AG04449 (cell line): ENCODE measurements at regions of chr9 and their contacts with region 1.

Region 1: DNA sequence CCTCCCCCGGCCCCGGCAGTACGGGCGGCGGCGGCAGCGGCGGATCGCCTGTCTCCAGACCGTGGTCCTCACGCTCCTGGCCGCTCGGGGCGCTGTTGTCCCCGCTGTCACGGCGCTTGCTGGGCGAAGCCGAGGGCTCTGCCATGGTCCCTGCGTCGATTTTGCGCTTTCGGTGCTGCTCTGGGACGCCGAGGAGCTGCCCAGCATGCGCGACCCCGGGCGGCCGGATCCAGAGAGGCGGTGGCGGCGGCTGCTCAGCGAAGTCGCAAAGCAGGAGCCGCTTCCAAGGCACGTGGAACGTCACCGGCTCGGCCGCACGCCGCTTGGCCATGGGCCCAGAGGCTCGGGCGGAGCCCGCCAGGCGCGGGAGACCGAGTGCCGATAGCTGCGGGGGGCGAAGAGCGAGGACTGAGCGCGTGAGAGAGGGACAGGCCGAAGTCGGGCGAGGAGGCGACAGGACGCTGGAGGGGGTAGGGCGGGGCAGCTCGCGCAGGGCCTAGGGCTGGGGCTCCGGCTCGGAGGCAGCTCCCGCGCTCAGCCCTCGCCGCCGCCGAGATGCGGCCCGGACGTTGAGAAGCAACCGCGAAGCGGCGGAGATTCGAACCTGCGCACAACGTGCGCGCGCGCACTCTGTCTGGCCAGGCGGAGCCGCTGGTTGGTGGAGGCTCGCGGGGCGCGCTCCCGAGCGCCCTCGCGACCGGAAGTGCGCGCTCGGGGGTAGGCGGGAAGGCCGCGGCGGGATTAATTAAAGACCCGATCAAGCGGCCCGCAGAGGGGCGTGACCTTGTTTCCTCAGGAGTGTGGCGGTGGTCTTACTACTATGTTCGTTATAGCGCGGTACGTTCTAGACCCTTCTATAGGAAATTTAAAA is at the start of gene C9orf40:
- DNase-seq: no peak
- H3K4me3 ChIP-seq: peak within 1 kb of the TSS; percentile 97
- CTCF ChIP-seq: peak; percentile 97

Region 2: DNA sequence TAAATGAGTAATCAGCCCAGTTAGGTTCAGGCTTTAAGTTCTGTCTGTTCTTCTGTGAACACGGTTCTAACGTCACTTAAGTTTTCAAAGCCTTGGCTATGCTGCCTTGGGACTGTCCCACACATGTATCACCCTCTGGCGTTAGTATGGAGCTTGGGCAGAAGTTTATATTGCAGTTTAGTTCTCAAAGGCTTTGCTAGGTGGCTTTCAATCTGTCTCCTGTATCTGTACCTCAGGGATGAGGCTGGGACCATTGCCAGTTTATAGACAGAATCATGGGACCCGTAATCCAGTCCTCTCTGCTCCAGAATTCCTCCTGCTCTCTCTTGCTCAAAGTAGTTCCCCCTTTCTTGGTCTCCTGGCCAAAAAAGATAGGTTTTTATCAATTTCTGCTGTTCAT is 11.9 kb before region 1 on chr9:
- CTCF ChIA-PET with region 1: interaction called, 13 read pairs
- POLR2A ChIA-PET with region 1: no interaction called
- DNase-seq: no peak
- H3K4me3 ChIP-seq: no peak overlapping the region
- CTCF ChIP-seq: no peak

Region 3: GRCh38 chr9:74973714-74974113 is 21.2 kb after region 1 on chr9:
- CTCF ChIA-PET with region 1: interaction called, 11 read pairs
- POLR2A ChIA-PET with region 1: no interaction called
- DNase-seq: no peak
- H3K4me3 ChIP-seq: no peak overlapping the region
- CTCF ChIP-seq: no peak

Region 4: DNA sequence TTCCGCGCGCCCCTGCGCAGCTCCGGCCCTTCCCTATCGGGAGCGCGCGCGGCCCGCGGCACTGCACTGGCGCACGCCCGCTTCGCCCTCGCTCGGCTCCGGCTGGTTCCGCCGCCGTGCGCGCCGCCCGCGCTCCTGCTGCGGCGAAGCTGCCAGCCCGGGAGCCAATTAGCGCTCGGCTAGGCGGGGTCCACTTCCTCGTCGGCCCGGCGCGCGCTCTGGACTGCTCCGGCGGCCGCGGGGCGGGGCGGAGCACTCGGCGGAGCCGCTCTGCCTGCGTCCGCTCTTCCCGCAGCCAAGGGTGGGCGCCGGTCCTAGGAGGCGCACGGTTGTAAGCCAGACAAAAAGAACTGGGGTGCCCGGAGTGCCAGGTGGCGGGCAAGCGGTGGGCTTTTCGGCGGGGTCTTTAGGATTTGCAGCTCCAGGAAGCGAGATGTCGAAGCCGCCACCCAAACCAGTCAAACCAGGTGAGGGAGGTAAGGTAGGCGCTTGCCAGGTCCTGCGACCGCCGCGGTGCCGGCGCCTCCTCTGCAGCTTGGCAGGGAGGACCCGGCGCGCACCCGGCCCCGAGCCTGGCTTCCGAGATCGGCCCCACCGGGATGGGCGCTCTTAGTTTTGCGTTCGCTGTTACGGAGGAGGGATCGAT is 135.9 kb after region 1 on chr9 and contains the start of gene OSTF1:
- CTCF ChIA-PET with region 1: interaction called, 17 read pairs
- POLR2A ChIA-PET with region 1: interaction called, 4 read pairs
- DNase-seq: peak; percentile 63
- H3K4me3 ChIP-seq: peak within 1 kb of the TSS; percentile 94
- CTCF ChIP-seq: no peak